ENCODE measurements at regions of chr2 and their contacts with region 1.

Region 1: GRCh38 chr2:179410552-179411356 is 146.1 kb upstream of the SESTD1 start:
- DNase-seq: no peak
- ATAC-seq: peak; percentile 50 to 62

Region 2: DNA sequence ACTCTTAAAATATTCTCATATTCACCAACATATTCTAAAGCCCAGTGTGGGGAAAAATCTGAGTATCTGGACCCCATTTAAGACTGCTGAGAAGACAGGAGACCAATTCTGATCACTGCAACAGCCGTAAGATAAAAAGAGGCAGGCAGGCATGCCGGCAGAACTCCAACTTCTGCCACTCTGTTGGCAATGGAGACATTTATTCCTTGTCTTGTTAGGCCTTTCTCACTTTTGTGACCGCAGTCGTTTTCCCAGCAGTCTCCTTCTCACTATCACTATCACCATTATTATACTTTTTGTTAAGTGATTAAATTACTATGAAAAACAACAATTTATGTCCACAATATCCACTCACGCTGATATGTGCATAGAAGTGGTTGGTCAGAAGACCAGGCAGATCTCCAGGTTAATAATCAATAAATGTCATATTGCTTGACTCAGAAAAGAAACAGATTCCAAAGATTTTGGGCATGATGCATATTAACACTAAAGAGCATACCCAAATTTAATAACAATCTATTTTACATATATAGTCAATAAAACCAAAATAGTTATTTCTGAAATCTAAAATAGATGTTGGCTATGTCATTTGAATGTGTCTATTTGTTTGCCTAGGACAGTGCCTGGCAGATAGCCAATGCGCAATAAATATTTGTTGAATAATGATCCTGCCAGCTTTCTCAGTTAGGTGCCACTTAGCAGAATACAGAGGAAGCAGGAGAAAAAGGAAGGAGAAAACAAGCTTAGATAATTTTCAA is 184.4 kb before region 1 on chr2:
- intact Hi-C with region 1: loop called in 1 of 2 experiments (anchors 10 kb)
- DNase-seq: no peak
- ATAC-seq: peak in 1 of 2 donors; percentile 57

Measured in left cardiac atrium (tissue), 4 donors.